ENCODE measurements at regions of chr1 and their contacts with region 1.

Region 1: GRCh38 chr1:152486400-152487006 is 24.1 kb upstream of the LCE5A start:
- DNase-seq: no peak
- ATAC-seq: peak; percentile 56; the same call in 1 of the 2 replicates
- H3K4me3 ChIP-seq: no peak overlapping the region
- H3K27ac ChIP-seq: no peak overlapping the region
- H3K4me1 ChIP-seq: no peaks in the 10 kb centered on the region
- H3K27me3 ChIP-seq: 0 out of 2 replicates have a peak, but pooled peaks cover 3% of the 10 kb centered on the region
- CTCF ChIP-seq: peak; percentile 79

Region 2: DNA sequence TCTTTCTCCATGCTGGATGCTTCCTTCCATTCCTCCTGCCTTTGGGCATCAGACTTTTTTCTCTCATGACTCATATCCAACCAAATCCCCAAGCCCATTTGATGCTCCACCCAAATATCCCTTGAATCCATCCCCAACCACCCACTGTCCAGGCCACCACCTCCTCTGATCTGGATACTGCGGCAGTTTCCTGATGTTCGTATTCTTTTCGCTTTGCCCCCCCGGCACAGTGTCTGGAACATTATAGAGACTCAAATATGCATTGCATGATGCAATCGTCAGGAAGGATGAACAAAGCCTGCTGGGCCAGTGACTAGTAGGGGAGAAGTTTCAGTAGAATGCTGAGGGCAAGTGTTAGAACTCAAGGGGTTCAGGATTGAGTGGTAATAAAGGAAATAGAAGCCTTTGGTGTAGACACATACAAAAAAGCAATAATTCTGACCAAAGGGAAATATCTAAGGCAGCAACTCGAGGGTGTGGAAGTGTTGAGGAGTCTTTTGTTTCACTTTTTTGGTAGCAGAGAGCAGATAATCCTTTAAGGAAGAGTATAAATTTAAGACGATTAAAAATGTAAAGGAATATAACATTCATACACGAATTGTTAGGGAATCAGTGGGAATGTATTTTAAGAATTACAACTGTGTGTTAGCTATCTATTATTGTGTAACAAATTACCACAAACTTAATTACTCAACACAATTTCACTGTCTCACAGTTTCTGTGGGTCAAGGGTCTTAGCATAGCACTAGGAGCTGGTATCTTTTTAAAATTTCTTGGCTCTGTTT is 457.2 kb before region 1 on chr1:
- CTCF ChIA-PET with region 1: no interaction called
- POLR2A ChIA-PET with region 1: interaction called, 22 read pairs
- in situ Hi-C with region 1: no loop called
- intact Hi-C with region 1: no loop called
- DNase-seq: no peak
- ATAC-seq: no peak
- H3K4me3 ChIP-seq: no peak overlapping the region
- H3K27ac ChIP-seq: peak overlapping the region; percentile 49; the same call in 1 of the 2 replicates
- H3K4me1 ChIP-seq: peaks cover 7% of the 10 kb centered on the region
- H3K27me3 ChIP-seq: no peaks in the 10 kb centered on the region
- CTCF ChIP-seq: no peak

Region 3: GRCh38 chr1:152380932-152381331 is 105.6 kb before region 1 on chr1:
- CTCF ChIA-PET with region 1: no interaction called
- POLR2A ChIA-PET with region 1: no interaction called
- in situ Hi-C with region 1: no loop called
- intact Hi-C with region 1: no loop called
- DNase-seq: no peak
- ATAC-seq: no peak
- H3K4me3 ChIP-seq: no peak overlapping the region
- H3K27ac ChIP-seq: no peak overlapping the region
- H3K4me1 ChIP-seq: no peaks in the 10 kb centered on the region
- H3K27me3 ChIP-seq: no peaks in the 10 kb centered on the region
- CTCF ChIP-seq: no peak

Measured in Panc1 (cell line).